ENCODE measurements at regions of chr13 and their contacts with region 1.

Region 1: DNA sequence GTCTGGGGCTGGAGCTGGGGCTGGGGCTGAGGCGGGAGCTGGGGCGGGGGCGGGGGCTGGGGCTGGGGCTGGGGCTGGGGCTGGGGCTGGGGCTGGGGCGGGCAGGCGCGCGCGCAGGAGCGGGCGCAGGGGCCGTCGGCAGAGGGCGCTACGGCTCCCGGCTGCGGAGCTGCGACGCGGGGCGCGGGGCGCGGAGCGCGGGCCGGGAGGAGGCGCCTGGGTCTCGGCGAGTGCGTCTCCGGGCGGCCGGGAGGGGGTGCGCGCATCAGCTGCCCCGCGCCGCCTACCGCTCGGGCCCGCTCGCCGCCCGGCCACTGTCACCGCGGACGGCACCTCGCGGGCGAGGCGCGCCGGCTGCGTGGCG is 422 bp upstream of the MTUS2 start:
- DNase-seq: no peak
- H3K4me3 ChIP-seq: peak overlapping the region; percentile 28
- CTCF ChIP-seq: no peak

Region 2: GRCh38 chr13:28679628-28680027 is 140.1 kb before region 1 on chr13:
- in situ Hi-C with region 1: loop called (anchors 25 kb)
- DNase-seq: no peak
- H3K4me3 ChIP-seq: no peak overlapping the region
- CTCF ChIP-seq: no peak

Region 3: DNA sequence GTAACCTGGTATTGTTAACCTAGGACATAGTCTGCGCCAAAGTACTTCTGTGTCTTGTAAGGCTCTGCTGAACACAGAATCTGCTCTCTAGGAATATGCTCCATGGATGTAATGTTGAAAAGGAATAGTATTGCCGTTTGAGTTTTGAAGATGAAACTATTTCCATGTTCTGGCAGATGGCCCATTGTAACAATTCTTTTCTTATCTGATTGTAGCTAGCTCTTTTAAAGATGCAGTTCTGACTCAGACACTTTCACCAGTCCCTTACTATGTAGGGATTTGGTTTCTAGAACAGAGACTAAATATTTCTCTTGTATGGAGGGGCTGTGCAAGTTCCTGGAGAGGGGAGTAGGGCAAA is 186.0 kb after region 1 on chr13:
- in situ Hi-C with region 1: no loop called
- DNase-seq: no peak
- H3K4me3 ChIP-seq: no peak overlapping the region
- CTCF ChIP-seq: no peak